ENCODE measurements at regions of chr10 and their contacts with region 1.

Region 1: DNA sequence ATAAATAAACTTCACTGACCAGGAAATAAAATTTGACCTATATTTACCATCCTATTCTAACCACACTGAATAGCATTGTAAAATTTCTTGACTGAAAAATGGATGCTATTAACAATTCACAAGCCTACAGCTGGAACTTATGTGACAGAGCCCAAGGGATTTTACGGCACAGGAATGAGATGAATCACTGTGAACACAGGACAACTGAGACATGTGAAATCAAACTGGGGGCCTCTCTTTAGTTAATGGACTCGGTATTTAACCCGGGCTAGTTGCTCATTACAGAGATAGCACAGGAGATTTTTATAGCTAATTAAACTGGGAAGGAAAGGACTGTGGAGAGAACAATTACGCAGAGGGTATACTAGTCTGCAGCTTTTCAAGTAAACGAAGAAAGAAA is 100.6 kb downstream of the MICU1 start:
- DNase-seq: no peak
- H3K4me3 ChIP-seq: no peak overlapping the region
- CTCF ChIP-seq: no peak
- POLR2A ChIP-seq: no peak

Region 2: DNA sequence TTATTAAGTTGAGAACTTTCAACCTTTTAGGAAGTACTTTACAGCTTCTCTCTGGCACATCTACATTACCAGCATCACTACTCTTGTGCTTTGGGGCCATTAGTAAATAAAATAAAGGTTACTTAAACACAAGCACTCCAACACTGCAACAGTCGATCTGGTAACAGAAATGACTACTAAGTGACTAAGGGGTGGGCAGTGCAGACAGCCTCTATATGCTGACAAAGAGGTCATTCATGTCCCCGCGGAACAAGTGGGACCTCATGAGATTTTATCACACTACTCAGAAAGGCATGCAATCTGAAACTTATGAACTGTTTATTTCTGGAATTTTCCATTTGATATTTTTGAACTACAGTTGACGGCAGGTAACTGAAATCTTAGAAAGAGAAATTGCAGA is 59.3 kb before region 1 on chr10:
- intact Hi-C with region 1: no loop called
- DNase-seq: no peak
- H3K4me3 ChIP-seq: no peak overlapping the region
- CTCF ChIP-seq: no peak
- POLR2A ChIP-seq: no peak

Region 3: DNA sequence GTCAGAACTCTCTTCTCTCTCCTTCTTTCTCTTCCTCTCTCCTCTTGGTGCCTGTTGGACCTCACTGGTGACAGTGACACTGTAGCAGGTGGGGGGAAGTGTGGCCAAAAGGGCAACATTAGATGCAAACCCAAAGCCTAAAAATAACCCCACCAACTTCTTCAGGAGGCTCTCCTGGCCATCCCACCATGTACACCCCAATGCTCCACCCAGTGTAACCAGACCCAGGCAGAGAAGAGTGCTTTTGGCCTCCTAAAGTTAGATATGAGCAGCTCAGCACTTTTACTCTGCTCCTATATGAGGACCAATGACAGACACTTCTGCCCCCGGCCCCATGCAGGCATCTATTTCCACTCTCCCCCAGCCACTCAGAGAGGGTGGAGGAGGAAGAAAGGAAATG is 1110.5 kb after region 1 on chr10:
- intact Hi-C with region 1: loop called (anchors 5 kb)
- DNase-seq: no peak
- H3K4me3 ChIP-seq: no peak overlapping the region
- CTCF ChIP-seq: no peak
- POLR2A ChIP-seq: no peak

Measured in lower leg skin (tissue), 4 donors.